ENCODE measurements at regions of chr12 and their contacts with region 1.

Region 1: DNA sequence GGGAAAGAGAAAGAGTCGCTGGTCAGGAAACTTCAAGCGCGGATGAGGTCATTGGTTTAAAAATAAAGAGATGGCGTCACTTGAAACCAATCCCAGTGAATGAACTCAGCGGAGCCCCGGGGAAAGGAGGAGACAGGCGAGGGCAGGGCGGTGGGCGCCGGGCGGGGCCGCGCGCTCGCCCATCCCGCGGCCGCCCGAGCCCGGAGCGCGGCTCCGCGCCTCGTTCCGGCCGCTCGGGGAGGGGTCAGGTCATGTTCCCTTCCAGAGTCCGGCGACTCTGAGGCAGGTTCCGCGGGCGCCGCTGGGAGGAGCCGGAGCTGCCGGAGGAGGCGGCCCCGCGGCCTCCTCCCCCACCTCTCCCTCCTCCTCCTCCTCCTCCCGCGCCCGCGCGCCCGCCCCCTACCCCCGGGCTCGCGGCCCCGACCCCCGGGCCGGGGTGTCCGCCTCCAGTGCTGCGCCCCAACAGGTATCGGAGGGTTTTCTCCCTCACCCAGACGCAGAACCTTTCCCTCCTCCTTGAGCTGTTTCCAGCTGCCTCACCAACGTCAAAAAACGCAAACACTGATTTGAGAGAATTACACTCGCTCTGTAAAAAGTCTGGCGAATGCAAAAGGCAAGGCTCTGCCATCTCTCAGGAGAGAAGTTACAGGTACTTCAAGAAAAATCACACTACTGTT is at the start of gene DUSP16:
- DNase-seq: peak; percentile 88
- H3K4me3 ChIP-seq: peak within 1 kb of the TSS; percentile 82
- H3K27me3 ChIP-seq: no peaks in the 10 kb centered on the region
- CTCF ChIP-seq: peak; percentile 16; the same call in 1 of the 2 replicates
- polyA plus RNA-seq, gene DUSP16: 5.5 and 7.9 TPM in 2 replicates

Region 2: GRCh38 chr12:12159988-12160387 is 402.7 kb before region 1 on chr12:
- CTCF ChIA-PET with region 1: no interaction called
- POLR2A ChIA-PET with region 1: no interaction called
- DNase-seq: no peak
- H3K4me3 ChIP-seq: no peak overlapping the region
- H3K27me3 ChIP-seq: no peaks in the 10 kb centered on the region
- CTCF ChIP-seq: no peak

Region 3: GRCh38 chr12:12294215-12295005 is 268.3 kb before region 1 on chr12:
- CTCF ChIA-PET with region 1: no interaction called
- POLR2A ChIA-PET with region 1: no interaction called
- DNase-seq: no peak
- H3K4me3 ChIP-seq: no peak overlapping the region
- H3K27me3 ChIP-seq: peaks cover 2% of the 10 kb centered on the region; the same call in 1 of the 2 replicates
- CTCF ChIP-seq: no peak

Region 4: GRCh38 chr12:12577786-12578185 is 15.1 kb after region 1 on chr12:
- CTCF ChIA-PET with region 1: interaction called, 19 read pairs
- POLR2A ChIA-PET with region 1: no interaction called
- DNase-seq: no peak
- H3K4me3 ChIP-seq: no peak overlapping the region
- H3K27me3 ChIP-seq: no peaks in the 10 kb centered on the region
- CTCF ChIP-seq: no peak

Measured in BJ (cell line).